ENCODE measurements at regions of chr5 and their contacts with region 1.

Region 1: DNA sequence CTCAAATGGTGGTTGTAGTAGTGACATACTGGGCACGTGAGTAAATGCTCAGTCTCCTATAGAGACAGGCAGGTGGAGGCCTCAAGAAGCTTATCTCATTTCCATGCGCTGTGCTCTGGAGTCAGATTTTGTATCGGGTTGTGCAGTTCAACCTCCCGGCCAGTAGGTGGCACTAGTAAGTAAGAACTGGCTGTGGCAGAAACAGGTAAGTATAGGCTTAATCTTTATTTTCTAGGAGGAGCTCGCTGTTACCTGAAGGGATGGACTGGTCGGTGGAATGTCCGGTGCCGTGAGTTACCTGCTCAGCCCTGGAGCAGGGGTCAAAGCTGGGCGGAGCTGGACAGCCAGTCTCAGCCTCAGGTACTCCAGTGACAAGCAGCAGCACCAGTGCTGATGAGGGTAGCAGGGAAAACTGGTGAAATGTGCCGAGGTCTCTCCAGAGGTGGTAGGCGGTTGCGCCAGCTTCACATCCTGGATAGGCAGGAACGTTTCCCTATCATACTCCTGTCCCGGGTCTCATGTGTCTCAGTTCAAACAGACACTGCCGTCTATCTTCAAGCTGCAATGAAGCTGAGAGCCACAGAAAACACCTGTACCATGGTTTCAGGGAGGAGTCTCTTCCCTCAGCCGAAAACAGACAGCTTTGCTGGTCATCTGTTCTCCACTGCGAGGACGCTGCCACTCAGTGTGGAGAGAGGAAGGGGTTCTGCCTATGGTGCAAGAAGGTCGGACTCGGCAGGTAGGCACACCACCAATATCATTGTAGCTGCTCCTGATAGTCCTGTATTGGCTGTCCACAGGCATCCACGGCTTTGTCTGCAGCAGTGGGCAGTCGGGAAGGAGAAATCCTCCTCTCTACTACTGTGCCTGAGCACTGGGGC is 880.3 kb upstream of the SEMA6A start:
- DNase-seq: peak; percentile 20
- ATAC-seq: peak; percentile 95
- H3K4me3 ChIP-seq: peak overlapping the region; percentile 1; the same call in 1 of the 2 replicates
- H3K27ac ChIP-seq: no peak overlapping the region
- H3K4me1 ChIP-seq: no peaks in the 10 kb centered on the region
- H3K27me3 ChIP-seq: no peaks in the 10 kb centered on the region
- CTCF ChIP-seq: peak; percentile 80 to 91 (median 87)
- EP300 ChIP-seq: no peak
- POLR2A ChIP-seq: no peak
- RAD21 ChIP-seq: peak; percentile 81

Region 2: DNA sequence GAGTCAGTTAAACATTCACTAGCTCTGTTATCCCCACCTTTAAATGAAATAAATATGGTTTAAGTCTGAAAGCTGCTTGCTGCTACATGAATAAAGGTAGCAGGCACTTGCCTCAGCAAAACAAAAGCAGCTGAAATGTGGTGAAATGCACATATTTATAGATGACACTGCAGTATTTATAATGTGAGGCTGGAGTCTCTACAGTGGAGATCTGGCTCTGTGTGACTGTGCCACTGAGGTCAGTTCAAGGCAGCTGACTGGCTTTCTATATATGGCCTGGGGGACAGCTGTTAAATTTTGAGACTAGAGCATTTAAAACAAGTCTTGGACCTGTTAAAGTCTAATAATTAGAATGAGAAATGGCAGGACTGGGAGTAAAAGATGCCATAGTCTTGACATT is 20.7 kb before region 1 on chr5:
- CTCF ChIA-PET with region 1: interaction called, 20 read pairs
- POLR2A ChIA-PET with region 1: no interaction called
- RAD21 ChIA-PET with region 1: no interaction called
- SMC1A ChIA-PET with region 1: interaction called, 4 read pairs
- in situ Hi-C with region 1: no loop called
- intact Hi-C with region 1: no loop called
- DNase-seq: no peak
- ATAC-seq: no peak
- H3K4me3 ChIP-seq: no peak overlapping the region
- H3K27ac ChIP-seq: no peak overlapping the region
- H3K4me1 ChIP-seq: no peaks in the 10 kb centered on the region
- H3K27me3 ChIP-seq: no peaks in the 10 kb centered on the region
- CTCF ChIP-seq: no peak
- EP300 ChIP-seq: no peak
- POLR2A ChIP-seq: no peak
- RAD21 ChIP-seq: no peak

Region 3: DNA sequence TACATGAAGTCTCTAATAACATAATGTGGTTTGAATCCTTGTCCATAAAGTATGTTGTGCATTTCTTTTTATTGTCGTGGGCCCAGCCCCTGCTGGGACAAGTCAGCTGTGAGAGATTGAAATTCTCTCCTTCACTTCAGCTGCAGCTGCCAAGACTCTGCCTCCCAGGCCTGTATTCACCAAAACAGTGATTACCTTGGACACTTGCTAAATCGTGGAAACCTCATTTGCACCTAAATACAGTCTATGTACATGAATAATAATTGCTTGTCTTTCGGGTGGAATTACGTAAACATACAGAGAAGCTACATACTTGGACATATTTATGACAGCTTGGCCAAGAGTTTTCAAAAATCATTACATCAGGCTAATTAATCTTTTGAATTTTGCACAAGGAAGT is 18.2 kb after region 1 on chr5:
- CTCF ChIA-PET with region 1: interaction called, 14 read pairs
- POLR2A ChIA-PET with region 1: no interaction called
- RAD21 ChIA-PET with region 1: interaction called, 5 read pairs
- SMC1A ChIA-PET with region 1: interaction called, 6 read pairs
- in situ Hi-C with region 1: no loop called
- intact Hi-C with region 1: no loop called
- DNase-seq: no peak
- ATAC-seq: no peak
- H3K4me3 ChIP-seq: no peak overlapping the region
- H3K27ac ChIP-seq: no peak overlapping the region
- H3K4me1 ChIP-seq: no peaks in the 10 kb centered on the region
- H3K27me3 ChIP-seq: no peaks in the 10 kb centered on the region
- CTCF ChIP-seq: no peak
- EP300 ChIP-seq: no peak
- POLR2A ChIP-seq: no peak
- RAD21 ChIP-seq: no peak

Region 4: GRCh38 chr5:117519957-117520500 is 65.1 kb after region 1 on chr5:
- CTCF ChIA-PET with region 1: no interaction called
- POLR2A ChIA-PET with region 1: no interaction called
- RAD21 ChIA-PET with region 1: no interaction called
- SMC1A ChIA-PET with region 1: no interaction called
- in situ Hi-C with region 1: no loop called
- intact Hi-C with region 1: no loop called
- DNase-seq: no peak
- ATAC-seq: no peak
- H3K4me3 ChIP-seq: no peak overlapping the region
- H3K27ac ChIP-seq: no peak overlapping the region
- H3K4me1 ChIP-seq: no peaks in the 10 kb centered on the region
- H3K27me3 ChIP-seq: no peaks in the 10 kb centered on the region
- CTCF ChIP-seq: no peak
- EP300 ChIP-seq: no peak
- POLR2A ChIP-seq: no peak
- RAD21 ChIP-seq: no peak

Region 5: DNA sequence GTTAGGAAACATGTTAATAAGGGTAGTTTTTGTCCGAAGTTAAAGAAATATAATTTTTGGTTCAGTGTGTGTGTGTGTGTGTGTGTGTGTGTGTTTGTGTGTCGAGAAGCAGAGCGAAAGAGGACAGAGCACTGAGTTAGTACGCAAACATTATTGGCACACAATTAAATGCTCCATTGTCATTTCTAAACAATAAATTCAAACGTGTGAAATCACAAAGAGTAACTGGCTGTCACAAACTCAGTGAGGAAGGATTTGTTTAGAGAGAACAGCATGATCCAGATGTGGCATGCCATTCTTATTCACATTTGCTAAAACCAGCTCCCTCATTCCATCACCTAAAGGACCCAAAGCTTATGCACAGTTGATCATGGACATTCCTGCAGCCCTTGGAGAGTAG is 562.6 kb after region 1 on chr5:
- CTCF ChIA-PET with region 1: interaction called, 4 read pairs
- POLR2A ChIA-PET with region 1: no interaction called
- RAD21 ChIA-PET with region 1: no interaction called
- SMC1A ChIA-PET with region 1: no interaction called
- in situ Hi-C with region 1: no loop called
- intact Hi-C with region 1: loop called (anchors 10 kb)
- DNase-seq: no peak
- ATAC-seq: no peak
- H3K4me3 ChIP-seq: no peak overlapping the region
- H3K27ac ChIP-seq: no peak overlapping the region
- H3K4me1 ChIP-seq: no peaks in the 10 kb centered on the region
- H3K27me3 ChIP-seq: no peaks in the 10 kb centered on the region
- CTCF ChIP-seq: no peak
- EP300 ChIP-seq: no peak
- POLR2A ChIP-seq: no peak
- RAD21 ChIP-seq: no peak

Region 6: DNA sequence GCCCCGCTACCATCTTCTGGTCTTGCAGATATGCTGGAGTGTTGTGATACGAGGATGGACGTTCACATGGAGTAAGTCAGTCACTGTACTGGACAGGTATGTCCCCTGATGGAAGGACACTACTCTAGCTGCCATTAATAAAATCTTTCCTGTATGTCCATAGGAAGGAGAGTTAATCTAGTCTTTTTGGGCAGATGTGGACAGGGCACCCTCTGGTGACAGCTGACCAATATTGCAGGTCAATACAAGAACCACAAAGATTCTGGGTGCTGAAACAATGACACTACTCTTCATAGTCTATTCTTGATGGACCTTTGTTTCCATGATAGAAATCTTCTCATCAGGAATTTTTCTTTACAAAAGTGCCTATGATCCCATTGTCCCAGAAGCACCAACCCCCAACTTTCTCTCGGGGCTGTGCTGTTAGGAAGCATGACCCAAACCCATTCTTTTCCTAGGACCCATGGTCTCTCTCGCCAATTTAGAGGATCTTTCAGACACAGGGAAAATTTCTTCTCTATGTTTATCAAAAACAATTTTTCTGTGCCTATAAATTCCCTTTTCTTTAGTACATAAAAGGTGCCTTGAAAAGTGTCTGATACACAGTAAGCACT is 1156.5 kb after region 1 on chr5:
- CTCF ChIA-PET with region 1: interaction called, 11 read pairs
- POLR2A ChIA-PET with region 1: no interaction called
- RAD21 ChIA-PET with region 1: interaction called, 7 read pairs
- SMC1A ChIA-PET with region 1: interaction called, 4 read pairs
- in situ Hi-C with region 1: loop called (anchors 25 kb)
- intact Hi-C with region 1: loop called (anchors 2 kb)
- DNase-seq: no peak
- ATAC-seq: peak; percentile 60
- H3K4me3 ChIP-seq: no peak overlapping the region
- H3K27ac ChIP-seq: no peak overlapping the region
- H3K4me1 ChIP-seq: no peaks in the 10 kb centered on the region
- H3K27me3 ChIP-seq: no peaks in the 10 kb centered on the region
- CTCF ChIP-seq: peak; percentile 54 to 58 (median 57)
- EP300 ChIP-seq: no peak
- POLR2A ChIP-seq: no peak
- RAD21 ChIP-seq: peak; percentile 74

Region 7: GRCh38 chr5:118956727-118957126 is 1501.8 kb after region 1 on chr5:
- CTCF ChIA-PET with region 1: no interaction called
- POLR2A ChIA-PET with region 1: no interaction called
- RAD21 ChIA-PET with region 1: interaction called, 4 read pairs
- SMC1A ChIA-PET with region 1: no interaction called
- in situ Hi-C with region 1: no loop called
- intact Hi-C with region 1: loop called (anchors 5 kb)
- DNase-seq: no peak
- ATAC-seq: no peak
- H3K4me3 ChIP-seq: no peak overlapping the region
- H3K27ac ChIP-seq: no peak overlapping the region
- H3K4me1 ChIP-seq: no peaks in the 10 kb centered on the region
- H3K27me3 ChIP-seq: no peaks in the 10 kb centered on the region
- CTCF ChIP-seq: peak in 2 of 3 experiments; percentile 31 to 46; a peak in 2 of 6 replicates
- EP300 ChIP-seq: no peak
- POLR2A ChIP-seq: no peak
- RAD21 ChIP-seq: peak; percentile 56

Measured in GM12878 (cell line).